T-cell (primary cell): ENCODE measurements at regions of chr2 and their contacts with region 1.

Region 1: DNA sequence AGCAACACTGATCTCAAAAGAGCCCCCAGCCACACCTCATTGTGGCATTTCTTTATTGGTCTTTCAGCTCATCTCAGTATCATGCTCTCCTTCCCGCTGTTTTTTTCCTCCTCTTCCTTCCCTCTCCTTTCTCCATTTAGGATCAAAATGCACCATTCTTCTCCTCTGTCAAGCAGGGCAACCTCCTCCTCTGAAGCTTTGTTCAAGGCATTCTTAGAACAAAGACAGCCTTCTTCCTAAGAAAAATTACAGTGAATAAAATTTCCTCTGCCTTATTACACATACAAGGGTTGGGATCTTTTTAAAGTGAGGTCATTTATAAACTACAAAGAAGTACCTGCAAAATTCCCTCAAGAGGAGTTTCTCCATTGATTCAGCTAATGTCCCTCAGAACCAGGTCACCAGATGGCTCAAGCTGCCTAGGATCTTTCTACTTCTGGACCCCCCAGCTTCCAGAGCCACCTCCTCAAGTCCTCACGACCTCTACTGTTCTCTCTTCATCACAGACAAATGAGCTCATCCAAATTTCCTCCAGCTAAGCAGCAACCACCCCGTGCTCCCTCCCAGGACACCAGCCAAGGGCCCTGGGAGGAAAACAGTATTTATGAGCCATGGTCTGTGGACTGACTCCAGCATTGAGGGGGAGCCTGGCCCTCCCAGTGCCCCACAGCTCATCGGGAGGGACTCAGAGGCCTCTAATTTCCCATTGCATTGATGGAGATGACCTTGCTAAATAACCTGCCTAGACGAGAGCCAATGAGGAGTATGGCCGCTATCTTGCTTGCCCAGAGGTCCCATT is 18.0 kb downstream of the SFXN5 start:
- DNase-seq: no peak
- ATAC-seq: no peak
- H3K4me3 ChIP-seq: no peak overlapping the region
- H3K4me3 Mint-ChIP-seq: no peak overlapping the region
- H3K27ac ChIP-seq: no peak overlapping the region
- H3K27ac Mint-ChIP-seq: no peak overlapping the region
- H3K4me1 ChIP-seq: no peaks in the 10 kb centered on the region
- H3K4me1 Mint-ChIP-seq: no peaks in the 10 kb centered on the region
- H3K27me3 ChIP-seq: no peaks in the 10 kb centered on the region
- H3K27me3 Mint-ChIP-seq: no peaks in the 10 kb centered on the region

Region 2: DNA sequence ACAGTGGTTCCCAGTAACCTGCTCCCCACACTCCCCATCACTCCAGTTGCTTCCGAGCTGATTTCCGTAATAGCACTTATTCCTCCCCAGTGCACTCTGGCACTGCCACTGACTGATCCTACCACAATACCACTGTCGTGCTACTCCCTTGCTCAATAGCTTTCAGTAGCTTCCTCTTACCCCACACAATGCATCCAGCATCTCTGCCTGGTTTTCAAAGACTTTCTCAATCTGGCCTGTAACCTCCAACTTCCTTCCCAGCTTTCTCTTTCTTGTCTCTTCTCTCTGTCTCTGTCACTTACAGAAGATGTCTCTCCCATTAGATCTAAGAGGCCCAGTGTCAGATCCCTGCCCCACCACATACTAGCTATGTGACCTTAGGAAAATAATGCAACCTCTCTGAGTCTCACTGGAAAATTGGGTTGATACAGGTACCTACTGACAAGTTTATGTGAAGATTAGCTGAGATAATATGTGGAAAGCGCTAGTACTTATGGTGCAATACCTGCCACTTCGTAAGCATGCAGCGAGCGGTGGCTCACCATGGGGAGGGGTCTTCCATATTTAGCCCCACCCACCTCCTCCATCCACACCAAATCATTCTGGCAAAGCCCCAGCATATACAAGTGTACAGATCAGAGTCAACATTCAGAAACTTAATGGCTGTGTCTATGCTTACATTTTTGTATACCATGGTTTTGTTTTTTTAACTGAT is 18.7 kb before region 1 on chr2:
- CTCF ChIA-PET with region 1: interaction called in 1 of 2 experiments, 11 read pairs
- POLR2A ChIA-PET with region 1: no interaction called
- DNase-seq: no peak
- ATAC-seq: no peak
- H3K4me3 ChIP-seq: no peak overlapping the region
- H3K4me3 Mint-ChIP-seq: no peak overlapping the region
- H3K27ac ChIP-seq: no peak overlapping the region
- H3K27ac Mint-ChIP-seq: no peak overlapping the region
- H3K4me1 ChIP-seq: no peaks in the 10 kb centered on the region
- H3K4me1 Mint-ChIP-seq: no peaks in the 10 kb centered on the region
- H3K27me3 ChIP-seq: peaks cover 0 to 4% of the 10 kb centered on the region in 2 experiments
- H3K27me3 Mint-ChIP-seq: no peaks in the 10 kb centered on the region

Region 3: GRCh38 chr2:73337828-73338227 is 284.3 kb after region 1 on chr2:
- CTCF ChIA-PET with region 1: no interaction called
- POLR2A ChIA-PET with region 1: no interaction called
- DNase-seq: no peak
- ATAC-seq: no peak
- H3K4me3 ChIP-seq: no peak overlapping the region
- H3K4me3 Mint-ChIP-seq: no peak overlapping the region
- H3K27ac ChIP-seq: no peak overlapping the region
- H3K27ac Mint-ChIP-seq: no peak overlapping the region
- H3K4me1 ChIP-seq: no peaks in the 10 kb centered on the region
- H3K4me1 Mint-ChIP-seq: no peaks in the 10 kb centered on the region
- H3K27me3 ChIP-seq: no peaks in the 10 kb centered on the region
- H3K27me3 Mint-ChIP-seq: peaks cover 3 to 5% of the 10 kb centered on the region in 2 donors

Region 4: GRCh38 chr2:73640511-73640911 is 587.0 kb after region 1 on chr2:
- CTCF ChIA-PET with region 1: no interaction called
- POLR2A ChIA-PET with region 1: interaction called in 1 of 2 experiments, 10 read pairs
- DNase-seq: no peak
- ATAC-seq: no peak
- H3K4me3 ChIP-seq: no peak overlapping the region
- H3K4me3 Mint-ChIP-seq: no peak overlapping the region
- H3K27ac ChIP-seq: no peak overlapping the region
- H3K27ac Mint-ChIP-seq: no peak overlapping the region
- H3K4me1 ChIP-seq: no peaks in the 10 kb centered on the region
- H3K4me1 Mint-ChIP-seq: no peaks in the 10 kb centered on the region
- H3K27me3 ChIP-seq: peaks cover 0 to 17% of the 10 kb centered on the region in 2 experiments
- H3K27me3 Mint-ChIP-seq: peaks cover 19 to 24% of the 10 kb centered on the region in 2 donors